Gastrocnemius medialis (tissue), 4 donors: ENCODE measurements at regions of chr6 and their contacts with region 1.

Region 1: GRCh38 chr6:30483677-30484279 is 5.5 kb upstream of the HLA-E start:
- DNase-seq: no peak
- ATAC-seq: no peak
- H3K4me3 ChIP-seq: no peak overlapping the region
- H3K27ac ChIP-seq: peak overlapping the region in 1 of 4 donors; percentile 2
- H3K4me1 ChIP-seq: no peaks in the 10 kb centered on the region
- H3K27me3 ChIP-seq: peaks cover 38 to 46% (median 42%) of the 10 kb centered on the region in 3 donors
- CTCF ChIP-seq: peak; percentile 26 to 47 (median 44)
- POLR2A ChIP-seq: no peak

Region 2: DNA sequence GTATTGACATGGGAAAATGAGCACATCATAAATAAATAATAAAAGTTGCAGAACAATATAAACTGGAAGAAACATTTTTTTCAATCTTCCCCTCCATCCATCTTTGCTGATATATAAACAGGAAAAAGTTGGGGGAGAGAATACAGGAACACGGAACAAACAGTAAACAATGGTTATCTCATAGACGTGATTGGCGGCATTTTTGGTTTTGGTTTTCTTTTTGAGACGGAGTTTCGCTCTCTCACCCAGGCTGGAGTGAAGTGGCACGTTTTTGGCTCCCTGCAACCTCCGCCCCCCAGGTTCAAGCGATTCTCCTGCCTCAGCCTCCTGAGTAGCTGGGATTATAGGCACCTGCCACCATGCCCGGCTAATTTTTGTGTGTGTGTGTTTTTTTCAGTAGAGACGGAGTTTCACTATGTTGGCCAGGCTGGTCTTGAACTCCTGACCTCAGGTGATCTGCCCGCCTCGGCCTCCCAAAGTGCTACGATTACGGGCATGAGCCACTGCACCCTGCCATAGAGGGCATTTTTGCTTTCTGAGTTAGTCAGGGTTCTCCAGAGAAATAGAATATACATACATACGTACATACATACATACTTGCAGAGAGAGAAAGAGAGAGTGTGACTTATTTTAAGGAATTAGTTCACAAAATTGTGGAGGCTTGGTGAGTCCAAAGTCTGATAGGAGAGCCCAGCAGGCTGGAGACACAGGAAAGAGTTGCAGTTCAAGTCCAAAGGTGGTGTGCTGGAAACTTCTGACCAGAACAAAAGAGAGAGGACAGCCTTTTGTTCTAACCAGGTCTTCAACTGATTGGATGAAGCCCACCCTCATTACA is 49.9 kb after region 1 on chr6:
- in situ Hi-C with region 1: loop called in 2 of 4 experiments (anchors 5 to 10 kb)
- intact Hi-C with region 1: loop called (anchors 2 kb)
- DNase-seq: no peak
- ATAC-seq: no peak
- H3K4me3 ChIP-seq: no peak overlapping the region
- H3K27ac ChIP-seq: peak overlapping the region in 2 of 4 donors; percentile 48 to 52
- H3K4me1 ChIP-seq: no peaks in the 10 kb centered on the region
- H3K27me3 ChIP-seq: no peaks in the 10 kb centered on the region
- CTCF ChIP-seq: no peak
- POLR2A ChIP-seq: no peak

Region 3: DNA sequence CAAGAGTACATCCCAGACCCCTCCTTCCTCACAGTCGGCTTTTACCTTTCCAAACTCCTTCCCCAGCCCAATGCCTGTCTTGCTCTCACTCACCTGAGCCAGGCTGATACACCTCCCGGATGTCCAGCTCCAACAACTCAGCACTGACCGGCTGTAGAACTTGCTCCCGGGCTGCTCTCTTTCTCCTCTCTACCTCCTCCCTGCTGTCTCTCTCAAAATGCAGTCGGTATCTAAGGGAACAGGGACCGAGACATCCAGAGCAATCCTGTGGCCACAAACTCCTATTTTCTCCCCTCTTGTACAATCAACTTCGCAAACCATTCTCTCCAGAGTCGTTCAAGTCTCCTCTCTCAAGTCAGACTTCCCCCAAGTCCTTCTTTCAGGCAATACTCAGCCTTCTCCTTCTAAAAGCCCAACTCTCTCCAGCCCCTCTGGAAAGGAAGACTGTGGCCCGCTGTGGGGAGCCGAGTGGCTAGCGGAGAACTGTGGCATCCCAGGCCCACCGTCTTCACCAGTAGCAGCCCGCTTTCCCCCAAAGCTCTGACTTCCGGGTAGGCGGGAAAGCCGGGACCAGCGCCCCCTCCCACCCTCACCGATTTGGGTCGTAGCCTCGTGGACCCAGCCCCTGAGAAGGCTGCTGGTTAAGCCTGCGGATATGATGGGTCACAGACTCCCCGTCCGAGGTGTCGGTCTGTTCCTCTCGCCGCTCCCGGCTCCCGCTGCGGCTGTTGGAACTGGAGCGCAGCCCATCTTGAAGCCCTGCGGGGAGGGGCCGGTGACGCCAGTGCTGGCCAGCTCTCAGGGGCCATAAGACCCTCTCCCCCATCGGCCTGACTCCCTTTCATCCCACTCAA is 71.4 kb after region 1 on chr6:
- in situ Hi-C with region 1: no loop called
- intact Hi-C with region 1: no loop called
- DNase-seq: peak; percentile 10 to 42
- ATAC-seq: peak in 1 of 2 donors; percentile 11
- H3K4me3 ChIP-seq: peak overlapping the region; percentile 87 to 99 (median 96)
- H3K27ac ChIP-seq: peak overlapping the region; percentile 91 to 99 (median 95)
- H3K4me1 ChIP-seq: peaks cover 11 to 18% of the 10 kb centered on the region in 2 donors
- H3K27me3 ChIP-seq: no peaks in the 10 kb centered on the region
- CTCF ChIP-seq: no peak
- POLR2A ChIP-seq: no peak

Region 4: GRCh38 chr6:30599625-30600324 is 116.0 kb after region 1 on chr6:
- in situ Hi-C with region 1: no loop called
- intact Hi-C with region 1: loop called (anchors 5 kb)
- DNase-seq: no peak
- ATAC-seq: no peak
- H3K4me3 ChIP-seq: no peak overlapping the region
- H3K27ac ChIP-seq: no peak overlapping the region
- H3K4me1 ChIP-seq: no peaks in the 10 kb centered on the region
- H3K27me3 ChIP-seq: no peaks in the 10 kb centered on the region
- CTCF ChIP-seq: no peak
- POLR2A ChIP-seq: no peak

Region 5: GRCh38 chr6:30828027-30828960 is 344.5 kb after region 1 on chr6:
- in situ Hi-C with region 1: no loop called
- intact Hi-C with region 1: no loop called
- DNase-seq: peak; percentile 86 to 94
- ATAC-seq: peak; percentile 89 to 93
- H3K4me3 ChIP-seq: peak overlapping the region in 2 of 4 donors; percentile 31 to 42
- H3K27ac ChIP-seq: peak overlapping the region; percentile 85 to 94 (median 92)
- H3K4me1 ChIP-seq: peaks cover 28 to 31% of the 10 kb centered on the region in 2 donors
- H3K27me3 ChIP-seq: no peaks in the 10 kb centered on the region
- CTCF ChIP-seq: peak; percentile 88 to 97 (median 93)
- POLR2A ChIP-seq: peak in 1 of 2 donors; percentile 52